Activated CD4-positive, alpha-beta T cell treated with anti-CD3 and anti-CD28 coated beads for 36 hours (primary cell): ENCODE measurements at regions of chr1 and their contacts with region 1.

Region 1: GRCh38 chr1:207619871-207620542 is 24.9 kb upstream of the CR1L start:
- DNase-seq: peak; percentile 14
- ATAC-seq: peak; percentile 90
- H3K4me3 Mint-ChIP-seq: no peak overlapping the region
- H3K27ac Mint-ChIP-seq: no peak overlapping the region
- H3K4me1 Mint-ChIP-seq: no peaks in the 10 kb centered on the region
- H3K27me3 Mint-ChIP-seq: no peaks in the 10 kb centered on the region

Region 2: GRCh38 chr1:207579436-207579799 is 40.6 kb before region 1 on chr1:
- CTCF ChIA-PET with region 1: interaction called, 12 read pairs
- POLR2A ChIA-PET with region 1: no interaction called
- intact Hi-C with region 1: loop called in 1 of 2 experiments (anchors 1 kb)
- DNase-seq: peak; percentile 63
- ATAC-seq: peak; percentile 84
- H3K4me3 Mint-ChIP-seq: no peak overlapping the region
- H3K27ac Mint-ChIP-seq: no peak overlapping the region
- H3K4me1 Mint-ChIP-seq: no peaks in the 10 kb centered on the region
- H3K27me3 Mint-ChIP-seq: peaks cover 6% of the 10 kb centered on the region

Region 3: DNA sequence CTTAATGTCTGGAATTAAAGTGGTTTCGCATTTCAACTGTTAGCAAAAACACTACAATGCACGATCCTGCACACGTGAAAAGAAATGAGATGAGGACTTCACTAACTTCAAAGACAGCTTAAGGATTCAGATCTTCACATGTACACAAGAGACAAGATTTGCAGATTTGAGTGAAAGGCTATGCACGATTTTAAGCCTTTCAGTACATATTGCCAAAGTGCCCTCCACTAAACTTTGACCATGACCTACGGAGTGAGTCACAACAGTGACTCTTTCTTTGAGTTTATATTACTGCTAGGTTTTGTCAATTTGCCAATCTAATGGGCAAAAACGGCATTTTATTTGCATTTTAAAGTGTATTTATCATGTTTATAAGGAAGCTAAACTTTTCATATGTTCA is 16.2 kb before region 1 on chr1:
- CTCF ChIA-PET with region 1: interaction called, 29 read pairs
- POLR2A ChIA-PET with region 1: no interaction called
- intact Hi-C with region 1: no loop called
- DNase-seq: no peak
- ATAC-seq: no peak
- H3K4me3 Mint-ChIP-seq: no peak overlapping the region
- H3K27ac Mint-ChIP-seq: no peak overlapping the region
- H3K4me1 Mint-ChIP-seq: no peaks in the 10 kb centered on the region
- H3K27me3 Mint-ChIP-seq: no peaks in the 10 kb centered on the region

Region 4: DNA sequence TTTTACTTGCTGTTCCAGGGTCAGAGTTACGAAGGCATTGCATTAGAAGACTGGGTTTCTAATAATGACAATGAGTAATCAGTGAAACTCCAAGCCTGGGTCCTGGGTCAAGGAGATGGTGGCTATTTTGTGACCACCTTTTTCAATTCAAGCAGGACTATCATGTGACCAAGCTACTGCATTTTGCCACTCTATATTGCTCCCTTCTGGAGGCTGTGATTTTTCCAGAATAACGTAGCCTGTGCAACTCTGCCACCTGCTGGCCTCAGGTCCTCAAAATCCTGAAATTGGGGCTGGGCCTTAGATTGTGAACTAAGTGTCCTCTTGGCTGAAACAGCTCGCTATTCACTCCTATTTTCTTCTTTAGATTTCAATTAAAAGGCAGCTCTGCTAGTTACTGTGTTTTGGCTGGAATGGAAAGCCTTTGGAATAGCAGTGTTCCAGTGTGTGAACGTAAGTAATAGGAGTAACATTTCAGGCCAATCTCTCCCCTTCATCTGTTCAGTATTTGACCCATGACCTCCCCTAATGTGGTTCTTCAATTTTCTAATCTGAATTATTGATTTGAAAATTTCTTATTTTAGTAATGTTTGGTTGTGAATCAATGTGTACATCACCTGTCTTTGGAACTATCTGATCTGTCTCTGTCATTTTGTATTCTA is 78.9 kb after region 1 on chr1:
- CTCF ChIA-PET with region 1: interaction called, 13 read pairs
- POLR2A ChIA-PET with region 1: no interaction called
- intact Hi-C with region 1: no loop called
- DNase-seq: peak; percentile 66
- ATAC-seq: no peak
- H3K4me3 Mint-ChIP-seq: no peak overlapping the region
- H3K27ac Mint-ChIP-seq: no peak overlapping the region
- H3K4me1 Mint-ChIP-seq: no peaks in the 10 kb centered on the region
- H3K27me3 Mint-ChIP-seq: peaks cover under 1% of the 10 kb centered on the region